ENCODE measurements at regions of chr17 and their contacts with region 1.

Region 1: GRCh38 chr17:37047631-37048104 is 98.9 kb downstream of the AATF start:
- DNase-seq: peak; percentile 40 to 87 (median 72)
- ATAC-seq: peak; percentile 64 to 90 (median 88)
- H3K4me3 ChIP-seq: no peak overlapping the region
- H3K27ac ChIP-seq: no peak overlapping the region
- H3K4me1 ChIP-seq: no peaks in the 10 kb centered on the region
- H3K27me3 ChIP-seq: no peaks in the 10 kb centered on the region
- CTCF ChIP-seq: peak; percentile 77 to 87 (median 80)

Region 2: DNA sequence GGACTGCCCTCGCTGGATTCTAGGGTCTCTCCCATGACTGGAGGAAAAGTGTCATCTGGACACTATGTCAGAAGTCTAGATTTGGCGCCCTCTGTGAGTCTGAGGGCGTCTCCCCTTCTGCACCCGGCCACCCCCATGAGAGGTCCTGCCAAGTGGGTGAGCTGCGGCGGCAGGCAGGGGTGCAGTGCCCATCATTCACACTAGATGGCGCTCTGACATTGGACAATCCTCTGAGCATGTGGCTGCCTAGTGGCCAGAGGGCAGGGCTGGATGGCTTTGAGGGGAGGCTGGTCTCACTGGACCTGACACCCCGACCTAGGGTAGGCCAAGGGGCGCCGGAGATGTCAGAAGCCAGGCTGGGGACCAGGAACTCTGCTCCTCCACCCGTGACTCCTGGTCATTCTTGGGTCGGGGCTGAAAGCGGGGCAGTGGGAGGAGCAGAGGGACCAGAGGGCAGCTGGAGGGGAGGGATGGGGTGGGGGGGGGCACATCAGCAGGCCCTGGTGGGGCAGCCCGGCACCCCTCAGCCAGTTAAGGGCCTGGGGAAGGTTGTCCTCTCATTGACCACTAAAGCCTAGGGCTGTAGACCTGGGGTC is 418.3 kb before region 1 on chr17:
- intact Hi-C with region 1: loop called in 2 of 3 experiments (anchors 5 to 10 kb)
- DNase-seq: peak; percentile 49 to 95 (median 82)
- ATAC-seq: peak; percentile 77 to 97 (median 87)
- H3K4me3 ChIP-seq: no peak overlapping the region
- H3K27ac ChIP-seq: no peak overlapping the region
- H3K4me1 ChIP-seq: no peaks in the 10 kb centered on the region
- H3K27me3 ChIP-seq: no peaks in the 10 kb centered on the region
- CTCF ChIP-seq: peak; percentile 98 to 99 (median 98)

Region 3: GRCh38 chr17:36705874-36706731 is 341.6 kb before region 1 on chr17:
- intact Hi-C with region 1: loop called in 1 of 3 experiments (anchors 10 kb)
- DNase-seq: peak in 3 of 6 donors; percentile 47 to 68 (median 48)
- ATAC-seq: peak in 3 of 4 donors; percentile 73 to 79 (median 79)
- H3K4me3 ChIP-seq: no peak overlapping the region
- H3K27ac ChIP-seq: no peak overlapping the region
- H3K4me1 ChIP-seq: no peaks in the 10 kb centered on the region
- H3K27me3 ChIP-seq: no peaks in the 10 kb centered on the region
- CTCF ChIP-seq: peak in 3 of 4 donors; percentile 25 to 55 (median 41)

Measured in pancreas (tissue), 10 donors.